AG04449 (cell line): ENCODE measurements at regions of chr3 and their contacts with region 1.

Region 1: GRCh38 chr3:122392868-122393844 is 9.2 kb downstream of the FAM162A start:
- DNase-seq: no peak
- H3K4me3 ChIP-seq: no peak overlapping the region
- CTCF ChIP-seq: peak; percentile 45

Region 2: GRCh38 chr3:122403489-122403888 is 10.3 kb after region 1 on chr3:
- CTCF ChIA-PET with region 1: interaction called, 34 read pairs
- POLR2A ChIA-PET with region 1: no interaction called
- DNase-seq: no peak
- H3K4me3 ChIP-seq: no peak overlapping the region
- CTCF ChIP-seq: no peak

Region 3: DNA sequence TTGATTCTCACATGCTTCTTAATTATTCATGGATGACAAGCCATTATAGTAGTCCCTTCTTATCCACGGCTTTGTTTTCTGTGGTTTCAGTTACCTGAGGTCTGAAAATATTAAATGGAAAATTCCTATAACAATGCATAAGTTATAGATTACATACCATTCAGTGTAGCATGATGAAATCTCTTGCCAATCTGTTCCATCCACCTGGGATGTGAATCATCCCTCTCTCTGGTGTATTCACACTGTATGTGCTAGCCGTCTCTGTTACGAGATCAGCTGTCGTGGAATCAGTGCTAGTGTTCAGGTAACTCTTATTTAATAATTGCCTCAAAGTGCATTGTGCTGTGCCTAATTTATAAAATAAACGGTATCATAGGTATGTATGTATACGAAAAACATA is 17.5 kb after region 1 on chr3:
- CTCF ChIA-PET with region 1: interaction called, 34 read pairs
- POLR2A ChIA-PET with region 1: no interaction called
- DNase-seq: no peak
- H3K4me3 ChIP-seq: no peak overlapping the region
- CTCF ChIP-seq: no peak

Region 4: DNA sequence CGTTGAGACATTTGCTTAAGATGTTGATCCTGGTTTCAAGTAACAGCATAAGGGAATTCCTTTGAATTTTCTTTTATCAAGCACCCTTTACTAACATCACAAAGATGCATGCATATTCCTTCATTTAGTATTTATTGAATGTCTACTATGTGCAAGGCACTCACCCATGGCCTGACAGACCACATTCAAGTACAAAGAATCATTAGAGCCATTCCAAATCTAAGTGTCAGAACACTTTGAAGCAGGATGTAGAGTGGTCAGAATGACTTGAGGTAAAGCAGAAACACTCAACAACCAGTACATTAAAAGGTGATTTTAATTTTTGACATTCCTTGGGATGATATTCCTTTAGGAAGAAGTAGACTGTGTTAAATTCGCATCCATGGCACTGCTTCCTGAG is 28.7 kb after region 1 on chr3:
- CTCF ChIA-PET with region 1: no interaction called
- POLR2A ChIA-PET with region 1: no interaction called
- DNase-seq: no peak
- H3K4me3 ChIP-seq: no peak overlapping the region
- CTCF ChIP-seq: no peak